Common myeloid progenitor, CD34-positive (primary cell): ENCODE measurements at regions of chr19 and their contacts with region 1.

Region 1: DNA sequence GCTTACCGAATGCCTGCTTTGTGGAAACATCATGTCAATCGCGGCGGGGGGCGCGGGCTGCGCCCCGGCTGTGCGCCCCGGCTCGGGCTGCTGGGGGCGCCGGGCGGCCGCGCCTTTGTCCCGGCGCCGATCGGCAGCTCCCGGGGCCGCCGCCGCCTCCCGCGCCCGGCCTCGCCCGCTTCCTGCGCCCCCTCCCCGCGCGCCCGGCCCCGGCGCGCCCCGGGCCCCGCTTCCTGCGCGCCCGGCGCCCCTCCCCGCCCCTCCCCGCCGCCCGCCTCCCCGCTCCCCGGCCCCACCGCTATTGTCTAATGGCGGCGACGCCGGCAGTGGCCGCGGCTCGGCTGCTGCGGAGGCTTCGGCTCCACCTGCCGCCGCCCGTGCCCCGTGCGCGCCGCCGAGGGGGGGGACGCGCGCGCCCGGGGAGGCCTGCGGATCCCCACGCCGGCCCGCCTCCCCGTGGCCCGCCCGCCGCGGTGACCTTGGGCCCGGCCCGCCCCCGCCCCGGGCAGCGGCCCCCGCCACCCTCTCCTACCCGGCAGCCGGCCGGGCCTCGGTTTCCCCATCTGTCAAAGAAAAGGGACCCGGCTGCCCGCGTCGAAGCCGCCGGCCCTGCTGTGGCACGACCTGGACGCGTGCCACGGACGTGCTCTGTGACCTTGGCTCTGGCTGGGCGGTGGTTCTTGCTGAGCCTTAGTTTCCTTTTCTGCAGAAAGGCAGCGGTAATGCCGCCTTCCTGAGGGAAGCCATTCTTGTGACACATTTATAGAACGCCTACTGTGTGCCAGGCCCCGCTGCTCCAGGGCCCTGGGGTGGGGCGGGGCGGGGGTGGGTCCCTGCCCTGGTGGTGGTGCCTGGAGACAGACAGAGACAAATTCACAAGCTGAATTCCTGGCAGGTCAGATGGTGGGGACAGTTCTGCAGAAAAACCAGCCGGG is at the start of gene TLE5:
- DNase-seq: peak; percentile 56 to 77 (median 67)
- H3K4me3 ChIP-seq: peak within 1 kb of the TSS; percentile 70 to 87 (median 80)
- H3K27ac ChIP-seq: peak within 1 kb of the TSS in 1 of 2 experiments; percentile 75
- H3K4me1 ChIP-seq: peaks cover 0 to 43% (median 31%) of the 10 kb centered on the region in 4 experiments
- H3K27me3 ChIP-seq: no peaks in the 10 kb centered on the region

Region 2: DNA sequence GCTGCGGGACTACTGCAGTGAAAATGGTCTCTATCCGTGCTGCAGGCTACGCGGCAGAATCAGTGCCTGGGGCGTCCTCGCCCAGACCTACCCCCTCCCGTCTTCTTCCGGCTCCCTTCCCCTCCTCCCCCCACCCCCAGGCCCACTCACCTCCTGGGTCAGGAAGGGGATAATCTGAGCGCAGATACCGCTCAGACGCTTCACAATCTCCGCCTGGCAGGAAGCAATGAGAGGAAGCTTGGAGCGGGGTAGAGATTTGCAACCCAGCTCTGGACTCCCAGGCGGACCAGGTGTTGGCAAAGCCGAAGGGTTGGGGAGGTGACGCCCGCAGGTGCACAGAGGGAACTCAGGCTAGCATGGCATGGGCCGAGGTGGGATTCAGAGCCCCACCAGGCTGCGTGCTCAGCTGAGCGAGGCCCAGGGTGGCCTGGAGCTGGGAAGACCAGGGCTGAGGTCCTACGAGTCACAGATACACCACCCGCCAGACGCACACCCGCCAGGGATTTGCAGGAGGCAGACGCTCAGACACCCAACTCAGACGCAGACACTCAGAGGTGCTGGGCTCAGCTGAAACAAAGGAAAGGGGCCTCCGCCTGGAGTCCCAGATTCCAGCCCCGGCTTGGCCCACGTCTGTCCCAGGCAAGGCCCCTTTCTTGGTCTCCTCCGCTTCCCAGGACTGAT is 37.4 kb before region 1 on chr19:
- CTCF ChIA-PET with region 1: no interaction called
- POLR2A ChIA-PET with region 1: no interaction called
- DNase-seq: peak in 2 of 3 donors; percentile 58 to 69
- H3K4me3 ChIP-seq: no peak overlapping the region
- H3K27ac ChIP-seq: no peak overlapping the region
- H3K4me1 ChIP-seq: peaks cover 0 to 24% (median 14%) of the 10 kb centered on the region in 4 experiments
- H3K27me3 ChIP-seq: peaks cover 0 to 63% (median 25%) of the 10 kb centered on the region in 5 experiments

Region 3: DNA sequence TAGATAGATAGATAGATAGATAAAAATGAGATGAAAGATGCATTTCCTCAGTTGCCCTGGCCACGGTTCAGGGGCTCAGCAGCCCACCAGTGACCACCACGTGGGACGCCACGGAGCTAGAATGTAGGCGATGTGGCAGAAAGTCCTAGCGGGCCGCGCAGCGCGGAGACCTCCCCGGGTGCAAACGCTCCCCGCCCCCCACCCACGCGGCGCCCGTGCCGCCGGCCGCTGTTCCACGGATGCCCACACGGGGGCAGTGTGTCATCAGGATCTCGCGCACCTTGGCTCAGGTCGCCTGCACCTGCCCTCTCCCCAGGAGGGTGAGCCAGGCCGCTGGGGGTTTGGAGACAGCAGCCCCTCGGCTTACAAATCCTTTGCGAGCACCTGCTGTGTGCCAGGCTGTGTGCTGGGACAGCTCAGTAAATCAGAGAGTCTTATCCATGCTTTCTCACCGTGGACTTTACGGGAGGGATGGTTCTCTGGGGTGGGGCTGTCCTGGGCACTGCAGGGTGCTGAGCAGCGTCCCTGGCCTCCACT is 13.5 kb after region 1 on chr19:
- CTCF ChIA-PET with region 1: interaction called, 11 read pairs
- POLR2A ChIA-PET with region 1: no interaction called
- DNase-seq: peak; percentile 45 to 68 (median 64)
- H3K4me3 ChIP-seq: peak overlapping the region in 3 of 7 experiments; percentile 15 to 55 (median 48)
- H3K27ac ChIP-seq: no peak overlapping the region
- H3K4me1 ChIP-seq: peaks cover 0 to 7% (median 3%) of the 10 kb centered on the region in 4 experiments
- H3K27me3 ChIP-seq: peaks cover 0 to 4% (median 0%) of the 10 kb centered on the region in 5 experiments